CD4-positive, alpha-beta T cell (primary cell): ENCODE measurements at regions of chr10 and their contacts with region 1.

Region 1: GRCh38 chr10:124647421-124648130 is 96.6 kb downstream of the FAM53B start:
- DNase-seq: peak; percentile 50 to 91 (median 74)
- ATAC-seq: peak; percentile 78
- H3K4me3 ChIP-seq: peak overlapping the region; percentile 35
- H3K4me3 Mint-ChIP-seq: peak overlapping the region; percentile 79
- H3K27ac ChIP-seq: peak overlapping the region; percentile 72 to 78
- H3K27ac Mint-ChIP-seq: peak overlapping the region; percentile 89
- H3K4me1 ChIP-seq: peaks cover 100% of the 10 kb centered on the region
- H3K4me1 Mint-ChIP-seq: peaks cover 90% of the 10 kb centered on the region
- H3K27me3 ChIP-seq: no peaks in the 10 kb centered on the region
- H3K27me3 Mint-ChIP-seq: no peaks in the 10 kb centered on the region
- CTCF ChIP-seq: peak; percentile 64

Region 2: GRCh38 chr10:124530215-124530665 is 117.3 kb before region 1 on chr10:
- CTCF ChIA-PET with region 1: no interaction called
- POLR2A ChIA-PET with region 1: no interaction called
- intact Hi-C with region 1: loop called in 1 of 2 experiments (anchors 10 kb)
- DNase-seq: peak; percentile 78 to 90 (median 84)
- ATAC-seq: peak; percentile 98
- H3K4me3 ChIP-seq: no peak overlapping the region
- H3K4me3 Mint-ChIP-seq: no peak overlapping the region
- H3K27ac ChIP-seq: no peak overlapping the region
- H3K27ac Mint-ChIP-seq: no peak overlapping the region
- H3K4me1 ChIP-seq: peaks cover 18% of the 10 kb centered on the region
- H3K4me1 Mint-ChIP-seq: peaks cover 9% of the 10 kb centered on the region
- H3K27me3 ChIP-seq: no peaks in the 10 kb centered on the region
- H3K27me3 Mint-ChIP-seq: no peaks in the 10 kb centered on the region
- CTCF ChIP-seq: peak; percentile 66

Region 3: GRCh38 chr10:124671486-124672075 is 24.0 kb after region 1 on chr10:
- CTCF ChIA-PET with region 1: interaction called, 6 read pairs
- POLR2A ChIA-PET with region 1: interaction called, 22 read pairs
- intact Hi-C with region 1: loop called in 1 of 2 experiments (anchors 2 kb)
- DNase-seq: peak in 3 of 14 experiments; percentile 47 to 51 (median 50)
- ATAC-seq: peak; percentile 47
- H3K4me3 ChIP-seq: no peak overlapping the region
- H3K4me3 Mint-ChIP-seq: peak overlapping the region; percentile 70
- H3K27ac ChIP-seq: peak overlapping the region in 1 of 2 donors; percentile 33
- H3K27ac Mint-ChIP-seq: peak overlapping the region; percentile 73
- H3K4me1 ChIP-seq: peaks cover 98% of the 10 kb centered on the region
- H3K4me1 Mint-ChIP-seq: peaks cover 92% of the 10 kb centered on the region
- H3K27me3 ChIP-seq: no peaks in the 10 kb centered on the region
- H3K27me3 Mint-ChIP-seq: no peaks in the 10 kb centered on the region
- CTCF ChIP-seq: no peak

Region 4: GRCh38 chr10:124677749-124678556 is 30.4 kb after region 1 on chr10:
- CTCF ChIA-PET with region 1: interaction called, 4 read pairs
- POLR2A ChIA-PET with region 1: interaction called, 22 read pairs
- intact Hi-C with region 1: no loop called
- DNase-seq: peak in 1 of 14 experiments; percentile 28
- ATAC-seq: peak; percentile 42
- H3K4me3 ChIP-seq: no peak overlapping the region
- H3K4me3 Mint-ChIP-seq: peak overlapping the region; percentile 63
- H3K27ac ChIP-seq: peak overlapping the region; percentile 29 to 39
- H3K27ac Mint-ChIP-seq: peak overlapping the region; percentile 87
- H3K4me1 ChIP-seq: peaks cover 94% of the 10 kb centered on the region
- H3K4me1 Mint-ChIP-seq: peaks cover 90% of the 10 kb centered on the region
- H3K27me3 ChIP-seq: no peaks in the 10 kb centered on the region
- H3K27me3 Mint-ChIP-seq: no peaks in the 10 kb centered on the region
- CTCF ChIP-seq: no peak

Region 5: GRCh38 chr10:124688889-124689670 is 41.5 kb after region 1 on chr10:
- CTCF ChIA-PET with region 1: interaction called, 6 read pairs
- POLR2A ChIA-PET with region 1: interaction called, 9 read pairs
- intact Hi-C with region 1: loop called in 1 of 2 experiments (anchors 5 kb)
- DNase-seq: peak in 7 of 14 experiments; percentile 23 to 82 (median 58)
- ATAC-seq: peak; percentile 72
- H3K4me3 ChIP-seq: no peak overlapping the region
- H3K4me3 Mint-ChIP-seq: peak overlapping the region; percentile 17
- H3K27ac ChIP-seq: peak overlapping the region in 1 of 2 donors; percentile 32
- H3K27ac Mint-ChIP-seq: peak overlapping the region; percentile 78
- H3K4me1 ChIP-seq: peaks cover 85% of the 10 kb centered on the region
- H3K4me1 Mint-ChIP-seq: peaks cover 73% of the 10 kb centered on the region
- H3K27me3 ChIP-seq: no peaks in the 10 kb centered on the region
- H3K27me3 Mint-ChIP-seq: no peaks in the 10 kb centered on the region
- CTCF ChIP-seq: no peak

Region 6: DNA sequence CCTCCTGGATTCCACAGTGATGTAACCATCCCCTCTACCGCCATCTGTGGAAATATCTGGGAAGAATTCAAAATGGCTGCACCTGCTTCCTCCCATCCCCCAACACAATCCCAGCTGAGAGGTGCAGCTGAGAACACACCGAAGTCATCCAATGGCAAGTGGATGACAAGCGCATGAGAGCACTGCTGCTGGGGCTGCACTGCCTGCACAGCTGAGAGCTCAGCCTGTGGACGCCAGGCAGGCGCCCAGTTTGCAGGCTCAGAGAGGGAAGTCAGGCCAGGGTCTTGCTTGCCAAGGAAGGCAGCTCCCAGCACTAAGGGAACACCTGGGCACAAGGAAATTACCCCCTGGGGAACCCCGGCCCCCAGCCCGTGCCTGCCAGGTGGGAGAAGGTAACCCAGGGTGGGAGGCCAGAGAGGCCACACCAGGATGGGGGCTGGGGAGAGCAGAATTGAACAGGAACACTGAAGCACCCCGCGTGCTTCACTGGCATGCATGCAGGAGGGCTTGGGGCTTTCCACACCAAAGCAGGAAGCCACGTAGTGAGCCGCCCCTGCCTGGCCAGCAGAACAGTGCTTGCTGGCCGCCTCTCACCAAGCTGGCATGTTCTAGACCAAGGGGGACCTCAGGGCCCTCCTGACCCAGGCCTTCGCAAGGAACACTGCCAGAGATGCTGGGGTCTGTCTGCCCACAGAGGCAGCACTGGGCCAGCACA is 50.4 kb after region 1 on chr10:
- CTCF ChIA-PET with region 1: interaction called, 7 read pairs
- POLR2A ChIA-PET with region 1: interaction called, 14 read pairs
- intact Hi-C with region 1: no loop called
- DNase-seq: peak in 11 of 14 experiments; percentile 32 to 81 (median 43)
- ATAC-seq: peak; percentile 59
- H3K4me3 ChIP-seq: no peak overlapping the region
- H3K4me3 Mint-ChIP-seq: peak overlapping the region; percentile 42
- H3K27ac ChIP-seq: peak overlapping the region; percentile 74 to 85
- H3K27ac Mint-ChIP-seq: peak overlapping the region; percentile 91
- H3K4me1 ChIP-seq: peaks cover 97% of the 10 kb centered on the region
- H3K4me1 Mint-ChIP-seq: peaks cover 95% of the 10 kb centered on the region
- H3K27me3 ChIP-seq: no peaks in the 10 kb centered on the region
- H3K27me3 Mint-ChIP-seq: no peaks in the 10 kb centered on the region
- CTCF ChIP-seq: no peak

Region 7: GRCh38 chr10:124732931-124733570 is 85.5 kb after region 1 on chr10:
- CTCF ChIA-PET with region 1: interaction called, 5 read pairs
- POLR2A ChIA-PET with region 1: interaction called, 13 read pairs
- intact Hi-C with region 1: loop called in 1 of 2 experiments (anchors 5 kb)
- DNase-seq: peak in 8 of 14 experiments; percentile 25 to 75 (median 63)
- ATAC-seq: peak; percentile 53
- H3K4me3 ChIP-seq: peak overlapping the region; percentile 36
- H3K4me3 Mint-ChIP-seq: peak overlapping the region; percentile 80
- H3K27ac ChIP-seq: peak overlapping the region; percentile 46 to 81
- H3K27ac Mint-ChIP-seq: peak overlapping the region; percentile 93
- H3K4me1 ChIP-seq: peaks cover 100% of the 10 kb centered on the region
- H3K4me1 Mint-ChIP-seq: peaks cover 97% of the 10 kb centered on the region
- H3K27me3 ChIP-seq: no peaks in the 10 kb centered on the region
- H3K27me3 Mint-ChIP-seq: no peaks in the 10 kb centered on the region
- CTCF ChIP-seq: no peak